ENCODE measurements at regions of chr11 and their contacts with region 1.

Region 1: DNA sequence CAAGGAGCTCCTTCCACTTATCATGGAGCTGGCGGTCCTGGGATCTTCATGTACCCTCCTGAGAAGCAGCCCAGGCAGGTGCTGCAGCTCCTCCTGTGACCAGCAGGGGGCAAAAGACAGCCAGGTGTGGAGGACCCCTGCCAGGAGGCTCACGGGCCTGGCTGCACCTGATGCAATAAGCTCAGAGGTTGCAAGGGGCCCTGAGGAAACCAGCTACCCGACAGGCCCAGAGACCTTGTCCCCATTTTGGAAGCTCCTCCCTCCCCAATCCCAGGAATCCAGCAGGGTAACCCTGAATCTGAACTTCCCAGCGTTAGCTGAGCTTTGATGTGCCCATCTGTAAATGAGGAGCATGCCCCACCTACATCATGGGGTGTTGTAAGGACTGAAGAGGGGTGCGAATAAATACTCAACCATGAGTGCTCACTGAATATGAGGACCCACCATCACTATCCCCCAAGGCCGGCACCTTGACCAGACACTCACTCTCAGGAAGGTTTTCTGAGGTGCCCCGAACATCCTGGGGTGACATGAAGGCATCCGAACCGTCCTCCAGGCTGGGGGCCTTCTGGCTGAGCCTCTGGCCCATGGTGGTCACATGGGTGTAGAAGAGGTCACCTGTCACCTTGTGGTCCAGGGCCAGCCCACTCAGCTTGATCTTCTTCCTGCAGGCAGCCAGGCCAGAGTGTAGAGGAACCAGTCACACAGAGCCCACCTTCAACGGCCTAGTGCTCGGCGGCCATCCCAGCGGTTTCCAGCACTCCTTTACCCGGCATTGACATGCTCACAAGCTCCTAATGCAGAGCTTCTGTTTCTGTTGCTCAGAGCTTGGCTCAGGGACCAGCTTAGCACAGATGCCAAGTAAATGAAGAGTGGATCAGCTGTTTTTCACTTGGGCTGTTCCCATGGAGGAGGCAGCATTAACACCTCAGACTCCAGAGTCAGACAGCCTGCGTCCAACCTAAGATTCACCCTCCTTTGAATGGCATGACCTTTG is 21.7 kb downstream of the SLC43A1 start:
- DNase-seq: peak; percentile 81
- ATAC-seq: peak; percentile 84
- H3K4me3 Mint-ChIP-seq: no peak overlapping the region
- H3K27ac Mint-ChIP-seq: peak overlapping the region; percentile 55
- H3K4me1 Mint-ChIP-seq: peaks cover 10% of the 10 kb centered on the region
- H3K27me3 Mint-ChIP-seq: no peaks in the 10 kb centered on the region

Region 2: GRCh38 chr11:57480409-57481137 is 13.2 kb before region 1 on chr11:
- CTCF ChIA-PET with region 1: interaction called, 63 read pairs
- DNase-seq: peak; percentile 86
- ATAC-seq: peak; percentile 70
- H3K4me3 Mint-ChIP-seq: no peak overlapping the region
- H3K27ac Mint-ChIP-seq: no peak overlapping the region
- H3K4me1 Mint-ChIP-seq: peaks cover 15% of the 10 kb centered on the region
- H3K27me3 Mint-ChIP-seq: peaks cover 49% of the 10 kb centered on the region

Region 3: GRCh38 chr11:57515332-57516060 is 21.7 kb after region 1 on chr11 and contains the start of gene SLC43A1:
- CTCF ChIA-PET with region 1: interaction called, 106 read pairs
- DNase-seq: peak; percentile 61
- ATAC-seq: peak; percentile 63
- H3K4me3 Mint-ChIP-seq: peak within 1 kb of the TSS; percentile 96
- H3K27ac Mint-ChIP-seq: peak within 1 kb of the TSS; percentile 89
- H3K4me1 Mint-ChIP-seq: peaks cover 30% of the 10 kb centered on the region
- H3K27me3 Mint-ChIP-seq: no peaks in the 10 kb centered on the region
- total RNA-seq, gene SLC43A1: 24.6 to 25.8 TPM

Region 4: DNA sequence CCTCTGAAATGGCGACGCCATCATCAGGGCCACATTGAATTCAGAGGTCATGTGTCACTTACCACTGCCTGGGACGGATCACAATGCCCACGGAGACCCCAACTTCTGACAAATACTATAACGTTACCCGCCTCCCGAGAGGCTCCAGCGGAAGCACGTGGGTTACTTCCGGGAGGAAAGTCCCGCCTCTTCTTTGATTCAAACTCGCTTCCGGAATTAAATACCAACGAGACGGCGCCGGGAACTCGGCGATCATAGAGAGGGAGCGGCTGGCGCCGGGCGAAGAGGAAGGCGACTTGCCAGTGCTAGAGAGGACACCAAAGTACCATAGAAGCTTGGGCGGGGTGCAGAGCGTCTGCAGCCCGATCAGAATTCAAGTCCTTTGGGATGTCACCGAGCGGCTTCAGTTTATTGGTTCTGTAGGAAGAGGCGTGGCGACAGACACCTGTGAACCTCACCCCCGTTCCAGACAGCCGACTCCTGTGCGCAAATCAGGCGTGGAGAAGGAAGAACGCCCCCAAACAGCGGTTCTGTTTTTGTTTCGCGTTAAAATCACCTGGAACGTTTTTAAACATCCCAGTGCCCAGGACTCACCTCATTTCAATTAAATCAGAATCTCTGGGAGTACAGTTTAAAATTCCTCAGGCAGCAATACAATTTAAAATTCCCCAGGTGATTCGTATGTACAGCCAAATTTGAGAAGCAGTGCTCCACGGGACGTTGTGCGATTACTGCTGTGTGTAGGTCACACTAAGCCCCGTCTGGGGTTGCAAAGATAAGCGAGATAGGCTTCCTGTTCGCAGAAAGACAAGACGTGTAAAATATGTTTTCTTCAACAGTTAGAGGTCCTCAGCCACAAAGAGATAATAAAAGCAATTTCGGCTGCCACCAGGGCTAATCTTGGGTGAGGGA is 37.0 kb after region 1 on chr11 and contains the start of gene TIMM10:
- CTCF ChIA-PET with region 1: interaction called, 247 read pairs
- DNase-seq: peak; percentile 97
- ATAC-seq: peak; percentile 97
- H3K4me3 Mint-ChIP-seq: peak within 1 kb of the TSS; percentile 77
- H3K27ac Mint-ChIP-seq: peak within 1 kb of the TSS; percentile 79
- H3K4me1 Mint-ChIP-seq: peaks cover 41% of the 10 kb centered on the region
- H3K27me3 Mint-ChIP-seq: no peaks in the 10 kb centered on the region
- total RNA-seq, gene TIMM10: 74.5 to 92.9 TPM

Region 5: DNA sequence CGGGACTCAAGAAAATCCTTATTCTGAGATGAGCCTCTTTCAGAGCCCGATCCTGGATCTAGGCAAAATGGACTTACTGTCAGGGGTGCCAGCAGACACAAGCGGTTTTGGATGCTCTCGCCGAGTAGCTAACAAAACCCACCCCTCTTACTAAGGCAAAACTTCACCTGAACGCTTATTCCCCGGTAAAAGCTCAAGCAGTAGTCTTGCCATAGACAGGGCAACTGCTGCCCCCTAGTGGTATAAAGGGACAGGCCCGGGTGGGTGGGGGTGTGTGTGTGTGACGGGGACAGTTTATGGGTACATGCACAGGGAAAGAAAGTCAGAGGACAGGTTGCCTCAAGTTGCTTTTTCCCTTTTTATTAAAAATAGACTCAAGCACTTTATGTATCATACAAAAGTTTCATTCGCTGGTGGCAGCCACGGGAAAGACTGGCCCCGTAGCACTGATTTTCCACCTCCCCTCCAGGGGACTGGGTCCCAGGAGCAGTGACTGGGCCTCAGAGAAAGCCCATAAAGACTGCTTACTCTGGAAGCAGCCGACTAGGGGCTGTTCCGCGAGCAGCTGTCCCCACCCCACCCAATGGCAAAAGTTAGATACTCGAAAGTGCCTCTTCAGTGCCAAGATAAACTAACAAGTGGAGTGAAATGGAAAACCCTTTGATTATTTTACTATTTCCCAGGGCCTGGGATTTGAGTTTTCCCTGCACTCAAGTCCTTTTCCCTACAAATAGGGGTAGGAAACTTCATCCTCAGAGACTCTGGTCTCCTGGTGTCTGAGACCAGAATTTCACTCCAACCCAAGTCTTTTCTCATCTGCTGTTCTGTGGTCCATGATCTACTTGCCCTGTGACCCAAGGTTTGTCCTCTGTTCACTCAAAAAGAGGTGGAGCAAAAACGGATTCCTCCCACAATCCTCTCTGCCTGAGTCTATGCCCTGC is 151.2 kb after region 1 on chr11:
- CTCF ChIA-PET with region 1: interaction called, 41 read pairs
- DNase-seq: peak; percentile 90
- ATAC-seq: peak; percentile 83
- H3K4me3 Mint-ChIP-seq: no peak overlapping the region
- H3K27ac Mint-ChIP-seq: no peak overlapping the region
- H3K4me1 Mint-ChIP-seq: peaks cover 33% of the 10 kb centered on the region
- H3K27me3 Mint-ChIP-seq: peaks cover 64% of the 10 kb centered on the region